ENCODE measurements at regions of chr1 and their contacts with region 1.

Region 1: GRCh38 chr1:219555031-219555692 is 57.7 kb downstream of the ZC3H11B start:
- DNase-seq: peak in 1 of 2 experiments; percentile 32
- H3K4me3 ChIP-seq: no peak overlapping the region
- H3K27ac ChIP-seq: no peak overlapping the region
- H3K4me1 ChIP-seq: peaks cover 9% of the 10 kb centered on the region; the same call in 1 of the 2 replicates
- H3K27me3 ChIP-seq: no peaks in the 10 kb centered on the region
- CTCF ChIP-seq: no peak

Region 2: GRCh38 chr1:219155135-219155534 is 400.0 kb before region 1 on chr1:
- CTCF ChIA-PET with region 1: no interaction called
- POLR2A ChIA-PET with region 1: no interaction called
- intact Hi-C with region 1: no loop called
- DNase-seq: no peak
- H3K4me3 ChIP-seq: no peak overlapping the region
- H3K27ac ChIP-seq: no peak overlapping the region
- H3K4me1 ChIP-seq: no peaks in the 10 kb centered on the region
- H3K27me3 ChIP-seq: no peaks in the 10 kb centered on the region
- CTCF ChIP-seq: no peak

Region 3: GRCh38 chr1:219518168-219518907 is 36.8 kb before region 1 on chr1:
- CTCF ChIA-PET with region 1: no interaction called
- POLR2A ChIA-PET with region 1: no interaction called
- intact Hi-C with region 1: loop called (anchors 5 kb)
- DNase-seq: peak; percentile 64 to 75
- H3K4me3 ChIP-seq: no peak overlapping the region
- H3K27ac ChIP-seq: peak overlapping the region; percentile 42; the same call in 1 of the 2 replicates
- H3K4me1 ChIP-seq: peaks cover 30% of the 10 kb centered on the region
- H3K27me3 ChIP-seq: no peaks in the 10 kb centered on the region
- CTCF ChIP-seq: no peak

Region 4: GRCh38 chr1:219639876-219640577 is 84.9 kb after region 1 on chr1:
- CTCF ChIA-PET with region 1: no interaction called
- POLR2A ChIA-PET with region 1: no interaction called
- intact Hi-C with region 1: no loop called
- DNase-seq: no peak
- H3K4me3 ChIP-seq: no peak overlapping the region
- H3K27ac ChIP-seq: no peak overlapping the region
- H3K4me1 ChIP-seq: no peaks in the 10 kb centered on the region
- H3K27me3 ChIP-seq: no peaks in the 10 kb centered on the region
- CTCF ChIP-seq: no peak

Measured in PC-9 (cell line).